ENCODE measurements at regions of chr17 and their contacts with region 1.

Region 1: DNA sequence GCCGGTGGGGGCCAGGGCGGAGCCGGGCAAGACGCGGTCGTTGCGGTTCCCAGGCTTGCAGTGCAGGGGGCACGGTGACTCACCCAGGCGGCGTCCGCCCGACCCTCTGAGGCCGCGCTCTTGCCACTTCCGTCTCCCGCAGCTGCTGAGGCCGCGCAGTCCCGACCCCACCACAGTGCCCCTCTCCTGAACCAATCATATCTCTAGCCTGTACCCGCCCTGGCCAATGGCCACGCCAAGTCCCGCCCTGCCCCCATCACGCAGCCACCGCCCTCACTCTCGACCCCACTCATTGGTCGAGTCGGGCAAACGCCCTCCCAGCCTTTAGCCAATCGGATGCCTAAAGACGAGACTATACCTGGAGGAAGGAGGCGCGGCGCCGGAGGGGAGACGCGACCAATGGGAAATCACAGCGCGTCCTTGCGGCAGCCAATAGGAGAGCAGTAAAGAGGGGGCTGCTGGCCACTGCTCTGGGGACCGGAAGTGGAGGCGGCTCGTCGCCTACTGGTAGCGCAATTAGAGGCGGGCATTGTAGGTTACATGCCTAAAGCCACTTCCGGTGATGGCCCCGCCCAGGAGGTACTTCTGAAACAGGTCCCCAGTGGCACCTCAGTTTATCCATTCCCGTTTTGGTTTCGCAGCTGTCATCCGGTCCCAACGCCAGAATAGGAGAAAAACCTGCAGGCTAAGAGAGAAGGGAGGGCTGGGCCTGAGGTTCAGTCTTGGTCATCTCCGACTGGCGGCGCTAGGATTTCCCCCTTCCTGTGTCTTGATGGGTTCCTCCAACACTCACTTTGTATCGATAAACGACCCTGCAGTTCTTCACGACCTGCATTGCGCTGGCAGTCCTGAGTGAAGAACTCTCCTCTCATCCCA is 3.5 kb upstream of the MTMR4 start:
- DNase-seq: peak; percentile 96
- CTCF ChIP-seq: no peak

Region 2: GRCh38 chr17:58432806-58433572 is 85.0 kb before region 1 on chr17:
- CTCF ChIA-PET with region 1: no interaction called
- POLR2A ChIA-PET with region 1: no interaction called
- DNase-seq: no peak
- CTCF ChIP-seq: no peak

Region 3: GRCh38 chr17:58504826-58505521 is 13.0 kb before region 1 on chr17:
- CTCF ChIA-PET with region 1: interaction called, 14 read pairs
- POLR2A ChIA-PET with region 1: interaction called, 5 read pairs
- DNase-seq: peak; percentile 85
- CTCF ChIP-seq: no peak

Region 4: GRCh38 chr17:58531661-58532554 is 13.9 kb after region 1 on chr17:
- CTCF ChIA-PET with region 1: interaction called, 31 read pairs
- POLR2A ChIA-PET with region 1: no interaction called
- DNase-seq: peak; percentile 78
- CTCF ChIP-seq: no peak

Region 5: GRCh38 chr17:59004338-59005111 is 486.6 kb after region 1 on chr17:
- CTCF ChIA-PET with region 1: interaction called, 12 read pairs
- POLR2A ChIA-PET with region 1: no interaction called
- DNase-seq: peak; percentile 57
- CTCF ChIP-seq: peak; percentile 88